ENCODE measurements at regions of chr2 and their contacts with region 1.

Region 1: GRCh38 chr2:48107326-48107925 is 201.1 kb upstream of the FBXO11 start:
- DNase-seq: peak in 1 of 4 experiments; percentile 28
- ATAC-seq: no peak
- H3K4me3 ChIP-seq: no peak overlapping the region
- H3K27ac ChIP-seq: no peak overlapping the region
- H3K4me1 ChIP-seq: peaks cover 17 to 19% of the 10 kb centered on the region in 2 experiments; a peak in 4 of 5 replicates
- H3K27me3 ChIP-seq: no peaks in the 10 kb centered on the region
- CTCF ChIP-seq: no peak
- EP300 ChIP-seq: no peak
- POLR2A ChIP-seq: no peak
- RAD21 ChIP-seq: no peak

Region 2: DNA sequence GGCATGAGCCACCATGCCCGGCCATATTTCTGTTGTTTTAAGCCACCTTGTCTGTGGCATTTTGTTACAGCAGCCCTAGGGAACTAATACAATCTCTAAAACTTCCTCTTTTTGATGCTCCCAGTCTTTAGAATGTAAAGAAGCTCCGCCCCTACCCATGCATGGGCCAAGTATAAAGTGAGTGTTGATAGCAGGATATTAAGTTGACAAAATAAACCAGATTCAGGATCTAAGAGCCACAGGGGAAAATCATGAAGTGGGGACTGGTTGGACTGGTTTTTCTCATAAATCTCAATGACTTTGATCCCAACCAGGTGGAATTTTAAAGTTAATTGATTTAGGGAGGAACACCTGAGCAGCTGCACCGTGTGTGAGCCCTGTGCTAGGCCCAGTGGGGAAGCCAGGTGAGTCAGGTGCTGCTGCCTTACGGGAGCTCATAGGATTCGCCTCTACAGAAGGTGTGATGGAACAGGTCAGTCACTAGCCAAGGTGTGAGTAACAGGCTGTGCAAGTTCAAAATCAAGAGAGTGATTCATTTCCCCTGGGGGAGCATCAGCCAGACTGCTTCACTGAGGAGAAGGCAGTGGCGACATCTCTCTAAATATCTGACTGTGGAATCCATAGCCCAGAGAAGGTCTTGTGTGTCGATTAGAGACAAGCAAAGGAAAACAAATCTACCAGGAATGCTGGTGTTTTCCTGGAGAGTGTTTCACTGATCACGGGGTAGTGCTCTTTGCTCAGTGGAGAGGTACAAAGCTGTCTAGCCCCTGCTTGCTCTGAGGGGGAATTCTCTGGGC is 767.5 kb before region 1 on chr2:
- CTCF ChIA-PET with region 1: no interaction called
- POLR2A ChIA-PET with region 1: no interaction called
- in situ Hi-C with region 1: no loop called
- intact Hi-C with region 1: loop called (anchors 10 kb)
- DNase-seq: no peak
- ATAC-seq: no peak
- H3K4me3 ChIP-seq: no peak overlapping the region
- H3K27ac ChIP-seq: peak overlapping the region; percentile 30; the same call in 1 of the 3 replicates
- H3K4me1 ChIP-seq: peaks cover 23 to 28% of the 10 kb centered on the region in 2 experiments
- H3K27me3 ChIP-seq: no peaks in the 10 kb centered on the region
- CTCF ChIP-seq: no peak
- EP300 ChIP-seq: no peak
- POLR2A ChIP-seq: no peak
- RAD21 ChIP-seq: no peak

Region 3: GRCh38 chr2:47777277-47777937 is 330.0 kb before region 1 on chr2:
- CTCF ChIA-PET with region 1: no interaction called
- POLR2A ChIA-PET with region 1: no interaction called
- in situ Hi-C with region 1: no loop called
- intact Hi-C with region 1: loop called (anchors 5 kb)
- DNase-seq: peak in 2 of 4 experiments; percentile 44 to 46
- ATAC-seq: peak; percentile 70
- H3K4me3 ChIP-seq: no peak overlapping the region
- H3K27ac ChIP-seq: no peak overlapping the region
- H3K4me1 ChIP-seq: peaks cover 10 to 12% of the 10 kb centered on the region in 2 experiments; a peak in 4 of 5 replicates
- H3K27me3 ChIP-seq: no peaks in the 10 kb centered on the region
- CTCF ChIP-seq: no peak
- EP300 ChIP-seq: no peak
- POLR2A ChIP-seq: no peak
- RAD21 ChIP-seq: no peak

Region 4: GRCh38 chr2:47906157-47907038 is 201.0 kb before region 1 on chr2 and contains the start of gene FBXO11:
- CTCF ChIA-PET with region 1: no interaction called
- POLR2A ChIA-PET with region 1: no interaction called
- in situ Hi-C with region 1: no loop called
- intact Hi-C with region 1: loop called (anchors 1 kb)
- DNase-seq: peak; percentile 95 to 97 (median 96)
- ATAC-seq: peak; percentile 86
- H3K4me3 ChIP-seq: peak within 1 kb of the TSS; percentile 93
- H3K27ac ChIP-seq: peak within 1 kb of the TSS; percentile 97
- H3K4me1 ChIP-seq: peaks cover 4 to 18% of the 10 kb centered on the region in 2 experiments; a peak in 4 of 5 replicates
- H3K27me3 ChIP-seq: no peaks in the 10 kb centered on the region
- CTCF ChIP-seq: peak; percentile 63 to 71 (median 64); a peak in 4 of 6 replicates
- EP300 ChIP-seq: peak; percentile 58
- POLR2A ChIP-seq: peak; percentile 85
- RAD21 ChIP-seq: no peak
- polyA plus RNA-seq, gene FBXO11: 8.8 to 11.8 TPM

Region 5: DNA sequence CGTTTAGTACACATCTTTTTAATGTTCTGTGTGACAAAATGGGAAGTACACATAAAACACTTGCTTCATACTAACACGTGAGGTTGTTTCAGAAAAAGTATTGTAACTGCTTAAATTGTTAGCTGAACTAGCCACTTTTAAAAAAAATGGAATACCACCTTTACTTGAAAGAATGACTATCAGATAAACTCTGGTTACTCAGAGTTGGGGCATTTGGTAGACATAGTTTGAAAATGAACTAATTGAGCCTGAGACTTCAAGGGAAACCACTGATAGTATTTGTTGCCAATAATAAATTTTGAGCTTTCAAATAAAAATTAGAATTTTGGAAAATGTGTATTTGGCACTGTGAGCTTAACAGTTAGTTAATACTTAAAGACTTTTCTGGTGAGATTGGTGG is 98.2 kb before region 1 on chr2:
- CTCF ChIA-PET with region 1: no interaction called
- POLR2A ChIA-PET with region 1: no interaction called
- in situ Hi-C with region 1: no loop called
- intact Hi-C with region 1: loop called (anchors 5 kb)
- DNase-seq: no peak
- ATAC-seq: no peak
- H3K4me3 ChIP-seq: no peak overlapping the region
- H3K27ac ChIP-seq: no peak overlapping the region
- H3K4me1 ChIP-seq: no peaks in the 10 kb centered on the region
- H3K27me3 ChIP-seq: peaks cover 0 to 3% of the 10 kb centered on the region in 2 experiments; a peak in 1 of 5 replicates
- CTCF ChIP-seq: no peak
- EP300 ChIP-seq: no peak
- POLR2A ChIP-seq: no peak
- RAD21 ChIP-seq: no peak

Region 6: GRCh38 chr2:48315896-48316194 is 208.4 kb after region 1 on chr2:
- CTCF ChIA-PET with region 1: no interaction called
- POLR2A ChIA-PET with region 1: no interaction called
- in situ Hi-C with region 1: no loop called
- intact Hi-C with region 1: no loop called
- DNase-seq: peak in 3 of 4 experiments; percentile 12 to 67 (median 12)
- ATAC-seq: peak; percentile 13
- H3K4me3 ChIP-seq: peak overlapping the region; percentile 88
- H3K27ac ChIP-seq: peak overlapping the region; percentile 90
- H3K4me1 ChIP-seq: peaks cover 5 to 22% of the 10 kb centered on the region in 2 experiments; a peak in 3 of 5 replicates
- H3K27me3 ChIP-seq: no peaks in the 10 kb centered on the region
- CTCF ChIP-seq: no peak
- EP300 ChIP-seq: no peak
- POLR2A ChIP-seq: no peak
- RAD21 ChIP-seq: no peak